Psoas muscle (tissue), 8 donors: ENCODE measurements at regions of chr1 and their contacts with region 1.

Region 1: GRCh38 chr1:227428803-227429202 is 110.5 kb upstream of the CDC42BPA start:
- DNase-seq: no peak
- ATAC-seq: no peak
- H3K4me3 ChIP-seq: no peak overlapping the region
- H3K27ac ChIP-seq: peak overlapping the region; percentile 37
- H3K4me1 ChIP-seq: peaks cover 16% of the 10 kb centered on the region
- H3K27me3 ChIP-seq: no peaks in the 10 kb centered on the region
- CTCF ChIP-seq: no peak

Region 2: GRCh38 chr1:227357171-227357880 is 71.5 kb before region 1 on chr1:
- intact Hi-C with region 1: loop called in 1 of 2 experiments (anchors 5 kb)
- DNase-seq: peak; percentile 67 to 81
- ATAC-seq: peak; percentile 97 to 99 (median 98)
- H3K4me3 ChIP-seq: no peak overlapping the region
- H3K27ac ChIP-seq: peak overlapping the region; percentile 66
- H3K4me1 ChIP-seq: peaks cover 15% of the 10 kb centered on the region
- H3K27me3 ChIP-seq: no peaks in the 10 kb centered on the region
- CTCF ChIP-seq: no peak

Region 3: GRCh38 chr1:227542143-227543120 is 113.6 kb after region 1 on chr1:
- intact Hi-C with region 1: no loop called
- DNase-seq: peak; percentile 91 to 95
- ATAC-seq: peak; percentile 96 to 99 (median 98)
- H3K4me3 ChIP-seq: peak overlapping the region; percentile 94
- H3K27ac ChIP-seq: peak overlapping the region; percentile 83
- H3K4me1 ChIP-seq: peaks cover 8% of the 10 kb centered on the region
- H3K27me3 ChIP-seq: no peaks in the 10 kb centered on the region
- CTCF ChIP-seq: peak; percentile 99

Region 4: GRCh38 chr1:227913764-227914721 is 485.2 kb after region 1 on chr1:
- intact Hi-C with region 1: no loop called
- DNase-seq: no peak
- ATAC-seq: no peak
- H3K4me3 ChIP-seq: no peak overlapping the region
- H3K27ac ChIP-seq: no peak overlapping the region
- H3K4me1 ChIP-seq: no peaks in the 10 kb centered on the region
- H3K27me3 ChIP-seq: no peaks in the 10 kb centered on the region
- CTCF ChIP-seq: no peak